RWPE1 (cell line): ENCODE measurements at regions of chr17 and their contacts with region 1.

Region 1: DNA sequence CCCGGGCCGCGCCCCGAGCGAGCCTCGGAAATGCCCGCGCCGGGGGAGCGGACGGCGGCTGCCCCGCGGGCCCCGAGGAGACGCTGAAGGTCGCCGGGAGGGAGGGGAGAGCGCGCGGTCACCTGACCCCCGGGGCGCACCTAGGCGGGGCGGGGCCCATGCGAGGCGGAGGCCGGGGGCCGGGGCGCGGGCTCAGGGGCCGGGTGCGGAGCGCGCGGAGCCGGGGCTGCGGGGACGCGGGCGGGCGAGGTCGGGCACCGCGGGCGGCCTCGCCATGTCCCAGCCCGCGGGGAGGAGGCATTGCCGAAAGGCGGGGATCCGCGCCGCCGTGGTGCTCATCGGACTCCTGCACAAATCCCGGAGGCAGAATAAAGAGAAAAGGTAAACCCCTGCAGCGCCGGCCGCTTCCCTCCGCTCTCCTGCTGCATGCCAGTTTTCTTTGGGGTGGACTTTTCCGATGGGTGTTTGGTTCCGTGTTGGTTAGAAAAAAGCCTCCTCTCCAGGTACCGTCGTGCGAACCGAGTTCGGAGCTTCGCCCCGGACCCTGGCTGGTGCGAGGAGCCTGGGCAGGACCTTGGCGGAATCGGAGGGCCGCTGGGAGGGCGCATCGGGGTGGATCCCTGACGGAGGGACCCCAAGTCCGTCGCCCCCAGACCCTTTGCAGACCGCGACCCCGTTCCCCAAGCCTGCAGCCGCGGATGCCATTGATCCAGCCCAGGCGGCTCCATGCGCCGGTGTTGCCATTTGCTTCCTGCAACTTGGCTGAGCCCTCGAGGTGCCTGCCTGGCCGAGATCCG is 57.7 kb downstream of the RAP1GAP2 start:
- DNase-seq: peak; percentile 39
- H3K27ac ChIP-seq: peak overlapping the region; percentile 83
- CTCF ChIP-seq: no peak

Region 2: GRCh38 chr17:2929881-2930533 is 76.1 kb after region 1 on chr17:
- CTCF ChIA-PET with region 1: interaction called, 26 read pairs
- POLR2A ChIA-PET with region 1: interaction called, 13 read pairs
- DNase-seq: peak; percentile 53
- H3K27ac ChIP-seq: peak overlapping the region; percentile 98
- CTCF ChIP-seq: peak; percentile 71